Activated T-helper 2 cell treated with anti-CD3 and anti-CD28 coated beads, Interferon-gamma antibody, Interleukin-2, Interleukin-4, amounts not matched to agents 10 μg/mL and 5 μg/mL and 100 μg/mL, durations not matched to agents 14 hours and 24 hours and 36 hours (primary cell): ENCODE measurements at regions of chr18 and their contacts with region 1.

Region 1: GRCh38 chr18:38611036-38611964 is 1045.7 kb upstream of the CELF4 start:
- DNase-seq: no peak
- H3K4me3 Mint-ChIP-seq: no peak overlapping the region
- H3K27ac Mint-ChIP-seq: peak overlapping the region; percentile 87
- H3K4me1 Mint-ChIP-seq: peaks cover 14% of the 10 kb centered on the region
- H3K27me3 Mint-ChIP-seq: no peaks in the 10 kb centered on the region

Region 2: DNA sequence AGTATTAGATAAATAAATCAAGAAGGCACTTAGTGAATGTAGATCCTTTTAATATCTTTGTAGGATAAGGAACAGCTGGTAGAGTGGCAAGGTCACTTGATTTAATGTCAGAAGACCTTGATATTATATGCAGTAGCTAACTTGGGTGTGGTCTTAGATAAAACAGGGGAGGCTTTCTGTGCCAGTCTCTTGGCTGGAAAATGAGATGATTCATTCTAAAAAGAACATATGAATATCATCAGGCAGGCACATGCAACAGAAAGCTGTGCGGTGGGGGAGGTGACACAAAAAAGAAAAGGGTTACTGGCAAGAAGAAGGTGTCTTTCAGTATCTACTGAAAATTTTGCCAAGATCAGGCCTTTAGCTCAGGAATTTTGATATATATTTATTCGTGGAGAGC is 114.0 kb before region 1 on chr18:
- intact Hi-C with region 1: loop called (anchors 2 kb)
- DNase-seq: no peak
- H3K4me3 Mint-ChIP-seq: no peak overlapping the region
- H3K27ac Mint-ChIP-seq: no peak overlapping the region
- H3K4me1 Mint-ChIP-seq: peaks cover 9% of the 10 kb centered on the region
- H3K27me3 Mint-ChIP-seq: no peaks in the 10 kb centered on the region

Region 3: DNA sequence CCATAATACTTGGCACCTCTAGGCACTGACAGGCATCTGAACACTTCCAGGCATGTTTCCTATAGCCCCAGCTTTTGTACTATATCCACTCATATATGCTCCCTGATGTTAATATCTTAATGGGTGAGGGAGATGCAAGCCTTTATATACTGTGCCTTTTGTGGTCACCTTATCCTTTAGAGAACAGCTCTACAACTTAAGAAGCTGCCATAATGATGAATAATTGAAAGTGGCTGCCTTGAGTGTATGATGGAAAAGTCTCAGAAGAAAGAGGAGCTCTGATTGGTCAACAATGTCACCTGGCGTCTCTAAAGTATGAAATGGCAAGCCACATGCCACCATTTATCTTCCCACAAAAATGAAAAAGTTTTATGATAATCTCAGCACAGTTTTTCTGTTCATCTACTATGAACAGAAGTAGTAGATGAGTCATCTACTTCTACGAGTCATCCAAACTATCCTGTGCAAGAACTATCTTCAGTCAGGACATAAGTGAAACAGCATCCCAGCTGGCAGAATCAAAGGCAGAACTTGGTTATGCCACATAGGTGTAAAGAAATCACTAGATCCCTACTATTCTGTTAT is 47.8 kb before region 1 on chr18:
- intact Hi-C with region 1: loop called (anchors 2 kb)
- DNase-seq: no peak
- H3K4me3 Mint-ChIP-seq: no peak overlapping the region
- H3K27ac Mint-ChIP-seq: no peak overlapping the region
- H3K4me1 Mint-ChIP-seq: peaks cover 2% of the 10 kb centered on the region
- H3K27me3 Mint-ChIP-seq: no peaks in the 10 kb centered on the region

Region 4: DNA sequence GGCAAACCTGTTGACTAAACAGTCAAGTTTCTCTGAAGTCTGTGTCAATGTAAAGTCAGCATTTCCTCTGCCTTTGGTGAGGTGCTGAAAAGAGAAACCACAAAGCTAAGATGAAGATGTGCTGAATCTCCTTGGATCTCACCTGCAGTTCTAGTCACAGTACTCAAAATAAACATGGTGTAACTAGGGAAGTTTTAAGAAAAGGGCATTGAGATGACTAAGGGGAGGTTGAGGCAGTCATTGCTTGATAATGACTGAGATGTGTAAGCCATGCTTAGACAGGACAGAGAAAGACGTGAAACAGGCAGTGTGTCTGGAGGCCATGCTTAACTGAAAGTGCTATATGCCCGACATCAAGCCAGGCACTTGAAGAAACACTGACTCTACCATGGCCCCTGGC is 35.7 kb before region 1 on chr18:
- intact Hi-C with region 1: loop called (anchors 1 kb)
- DNase-seq: no peak
- H3K4me3 Mint-ChIP-seq: peak overlapping the region; percentile 24
- H3K27ac Mint-ChIP-seq: peak overlapping the region; percentile 31
- H3K4me1 Mint-ChIP-seq: peaks cover 24% of the 10 kb centered on the region
- H3K27me3 Mint-ChIP-seq: no peaks in the 10 kb centered on the region

Region 5: DNA sequence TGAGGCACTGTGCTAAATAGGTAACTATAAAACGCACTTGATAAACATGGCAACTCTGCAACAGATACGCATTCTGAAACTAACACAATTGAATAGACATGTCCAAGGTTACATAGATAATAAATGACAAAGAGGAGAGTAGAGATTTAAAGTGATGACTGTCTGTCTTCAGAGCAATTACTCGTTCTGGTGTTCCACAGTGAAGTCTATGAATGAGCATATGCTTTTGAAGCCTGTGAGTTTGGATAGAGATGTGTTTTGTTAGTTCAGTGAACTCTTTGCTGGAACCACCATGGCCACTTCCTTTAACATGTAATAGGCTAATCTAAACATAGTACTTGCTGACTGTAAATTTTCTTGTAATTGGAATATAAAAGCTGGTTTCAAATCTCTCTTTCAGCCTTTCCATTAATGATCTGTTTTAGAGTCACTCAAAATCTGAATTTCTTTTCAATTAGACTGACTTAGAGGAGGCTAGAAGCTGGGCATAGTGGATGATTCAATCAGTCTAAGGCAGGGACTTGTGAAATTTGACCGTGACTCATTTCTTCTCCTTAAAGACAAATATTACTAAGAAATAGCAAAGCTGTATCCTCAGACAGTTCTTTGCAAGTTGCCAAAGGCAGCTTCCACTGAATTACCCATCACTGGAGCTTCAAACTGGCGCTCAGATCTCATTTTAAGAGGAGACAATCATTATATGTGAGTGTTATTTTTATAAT is 84.4 kb after region 1 on chr18:
- intact Hi-C with region 1: loop called (anchors 5 kb)
- DNase-seq: no peak
- H3K4me3 Mint-ChIP-seq: no peak overlapping the region
- H3K27ac Mint-ChIP-seq: no peak overlapping the region
- H3K4me1 Mint-ChIP-seq: peaks cover 5% of the 10 kb centered on the region
- H3K27me3 Mint-ChIP-seq: no peaks in the 10 kb centered on the region

Region 6: DNA sequence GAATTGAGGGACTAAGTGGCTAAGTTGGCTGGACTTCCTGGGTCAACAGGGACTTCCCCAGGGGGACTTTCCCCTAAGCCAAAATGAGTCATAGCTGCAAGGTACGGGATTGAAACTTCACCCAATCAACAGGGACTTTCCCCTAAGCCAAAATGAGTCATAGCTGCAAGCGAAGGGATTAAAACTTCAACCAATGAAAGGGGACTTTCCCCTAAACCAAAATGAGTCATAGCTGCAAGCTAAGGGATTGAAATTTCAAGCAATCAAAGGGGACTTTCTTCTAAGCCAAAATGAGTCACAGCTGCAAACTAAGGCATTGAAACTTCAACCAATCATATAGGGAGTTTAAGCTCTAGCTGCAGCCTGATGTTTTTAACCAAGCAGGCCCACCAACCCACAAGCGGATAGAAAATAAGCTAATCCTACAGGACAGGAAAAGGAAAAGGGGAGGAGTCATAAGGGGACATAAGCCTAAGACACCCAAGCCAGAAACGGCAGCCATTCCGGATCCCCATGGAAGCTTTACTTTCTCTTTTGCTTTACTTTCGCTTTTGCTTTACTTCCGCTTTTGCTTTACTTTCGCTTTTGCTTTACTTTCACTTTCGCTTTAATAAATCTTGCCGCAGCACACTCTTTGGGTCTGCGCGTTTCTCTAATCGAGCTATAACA is 329.7 kb after region 1 on chr18:
- intact Hi-C with region 1: loop called (anchors 1 kb)
- DNase-seq: peak; percentile 54
- H3K4me3 Mint-ChIP-seq: peak overlapping the region; percentile 26
- H3K27ac Mint-ChIP-seq: peak overlapping the region; percentile 81
- H3K4me1 Mint-ChIP-seq: peaks cover 27% of the 10 kb centered on the region
- H3K27me3 Mint-ChIP-seq: no peaks in the 10 kb centered on the region